CD4-positive, alpha-beta memory T cell (primary cell): ENCODE measurements at regions of chr1 and their contacts with region 1.

Region 1: DNA sequence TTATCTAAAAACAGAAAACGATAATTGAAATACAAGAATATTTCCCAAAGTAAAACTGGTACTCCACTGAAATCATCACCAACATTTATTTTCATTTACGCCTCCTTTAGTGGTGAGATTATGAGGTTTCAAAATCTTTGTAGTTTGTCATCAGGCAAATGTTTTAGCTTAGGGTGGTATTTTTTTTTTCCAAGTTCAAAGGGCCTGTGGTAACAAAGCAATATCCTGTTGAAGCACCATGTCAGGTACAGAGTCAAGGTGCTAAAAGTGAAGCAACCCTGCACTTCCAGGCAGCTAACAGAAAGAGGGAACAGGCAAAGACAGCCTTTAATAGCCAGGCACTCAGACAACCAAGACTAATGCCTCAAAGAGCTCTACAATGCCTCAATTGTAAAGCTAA is 89.2 kb downstream of the JAK1 start:
- DNase-seq: peak; percentile 76 to 90 (median 87)
- H3K4me3 ChIP-seq: no peak overlapping the region
- H3K4me3 Mint-ChIP-seq: peak overlapping the region; percentile 65 to 87 (median 82)
- H3K27ac ChIP-seq: peak overlapping the region; percentile 31
- H3K27ac Mint-ChIP-seq: peak overlapping the region; percentile 86 to 96 (median 94)
- H3K4me1 ChIP-seq: peaks cover 59% of the 10 kb centered on the region
- H3K4me1 Mint-ChIP-seq: peaks cover 60 to 89% (median 74%) of the 10 kb centered on the region in 4 donors
- H3K27me3 ChIP-seq: no peaks in the 10 kb centered on the region
- H3K27me3 Mint-ChIP-seq: no peaks in the 10 kb centered on the region

Region 2: DNA sequence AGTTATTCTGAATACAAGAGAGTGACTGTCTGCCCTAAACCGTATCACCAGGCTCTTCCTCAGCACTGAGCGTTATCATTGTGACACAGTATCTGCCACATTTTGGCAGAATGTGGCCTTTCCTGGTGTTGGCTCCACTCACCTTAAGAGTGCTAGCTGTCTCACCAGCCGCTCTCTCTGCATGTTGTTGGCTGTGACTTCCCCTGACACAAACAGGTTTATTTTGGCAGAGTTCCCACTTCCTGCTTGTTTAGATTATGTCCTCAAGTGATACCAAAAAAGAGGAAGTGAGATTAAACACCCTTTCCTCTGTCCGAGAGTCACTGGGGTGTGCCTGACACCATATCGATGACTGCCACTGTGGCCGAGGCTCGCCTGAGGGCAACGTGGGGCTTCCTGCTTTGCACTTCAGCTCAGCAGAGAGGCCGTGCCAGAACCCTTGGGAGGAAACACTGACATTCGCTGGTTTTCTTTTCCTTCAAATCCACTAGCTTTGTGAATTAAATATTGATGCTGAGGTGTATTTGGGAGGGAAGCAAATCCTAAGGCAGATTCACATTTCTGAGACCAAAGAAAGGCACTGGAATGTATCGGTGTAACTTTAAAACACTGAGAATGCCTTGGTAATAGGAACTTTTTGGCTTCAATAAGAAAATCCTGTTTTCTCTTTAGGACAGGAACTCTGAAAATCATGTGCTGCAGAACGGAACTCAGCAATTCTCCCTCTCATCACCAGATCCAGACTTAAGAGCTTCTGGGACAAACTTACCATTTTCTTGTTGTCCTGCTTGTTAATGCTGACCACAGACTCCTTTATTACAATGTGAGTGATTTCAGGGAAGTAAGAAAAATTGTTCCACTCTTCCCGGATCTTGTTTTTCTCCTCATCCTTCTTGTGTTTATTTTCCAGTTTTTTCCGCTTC is 12.9 kb before region 1 on chr1:
- CTCF ChIA-PET with region 1: interaction called, 6 read pairs
- POLR2A ChIA-PET with region 1: interaction called, 30 read pairs
- intact Hi-C with region 1: loop called (anchors 2 kb)
- DNase-seq: peak; percentile 71 to 77 (median 73)
- H3K4me3 ChIP-seq: no peak overlapping the region
- H3K4me3 Mint-ChIP-seq: peak overlapping the region in 7 of 8 donors; percentile 7 to 79 (median 64)
- H3K27ac ChIP-seq: peak overlapping the region; percentile 48
- H3K27ac Mint-ChIP-seq: peak overlapping the region; percentile 63 to 93 (median 89)
- H3K4me1 ChIP-seq: peaks cover 29% of the 10 kb centered on the region
- H3K4me1 Mint-ChIP-seq: peaks cover 30 to 58% (median 46%) of the 10 kb centered on the region in 4 donors
- H3K27me3 ChIP-seq: no peaks in the 10 kb centered on the region
- H3K27me3 Mint-ChIP-seq: no peaks in the 10 kb centered on the region

Region 3: GRCh38 chr1:64895500-64895899 is 18.3 kb after region 1 on chr1:
- CTCF ChIA-PET with region 1: interaction called, 4 read pairs
- POLR2A ChIA-PET with region 1: interaction called, 6 read pairs
- intact Hi-C with region 1: loop called (anchors 1 kb)
- DNase-seq: no peak
- H3K4me3 ChIP-seq: no peak overlapping the region
- H3K4me3 Mint-ChIP-seq: peak overlapping the region in 7 of 8 donors; percentile 13 to 49 (median 28)
- H3K27ac ChIP-seq: no peak overlapping the region
- H3K27ac Mint-ChIP-seq: peak overlapping the region in 5 of 7 donors; percentile 2 to 72 (median 17)
- H3K4me1 ChIP-seq: peaks cover 96% of the 10 kb centered on the region
- H3K4me1 Mint-ChIP-seq: peaks cover 82 to 98% (median 91%) of the 10 kb centered on the region in 4 donors
- H3K27me3 ChIP-seq: no peaks in the 10 kb centered on the region
- H3K27me3 Mint-ChIP-seq: no peaks in the 10 kb centered on the region

Region 4: DNA sequence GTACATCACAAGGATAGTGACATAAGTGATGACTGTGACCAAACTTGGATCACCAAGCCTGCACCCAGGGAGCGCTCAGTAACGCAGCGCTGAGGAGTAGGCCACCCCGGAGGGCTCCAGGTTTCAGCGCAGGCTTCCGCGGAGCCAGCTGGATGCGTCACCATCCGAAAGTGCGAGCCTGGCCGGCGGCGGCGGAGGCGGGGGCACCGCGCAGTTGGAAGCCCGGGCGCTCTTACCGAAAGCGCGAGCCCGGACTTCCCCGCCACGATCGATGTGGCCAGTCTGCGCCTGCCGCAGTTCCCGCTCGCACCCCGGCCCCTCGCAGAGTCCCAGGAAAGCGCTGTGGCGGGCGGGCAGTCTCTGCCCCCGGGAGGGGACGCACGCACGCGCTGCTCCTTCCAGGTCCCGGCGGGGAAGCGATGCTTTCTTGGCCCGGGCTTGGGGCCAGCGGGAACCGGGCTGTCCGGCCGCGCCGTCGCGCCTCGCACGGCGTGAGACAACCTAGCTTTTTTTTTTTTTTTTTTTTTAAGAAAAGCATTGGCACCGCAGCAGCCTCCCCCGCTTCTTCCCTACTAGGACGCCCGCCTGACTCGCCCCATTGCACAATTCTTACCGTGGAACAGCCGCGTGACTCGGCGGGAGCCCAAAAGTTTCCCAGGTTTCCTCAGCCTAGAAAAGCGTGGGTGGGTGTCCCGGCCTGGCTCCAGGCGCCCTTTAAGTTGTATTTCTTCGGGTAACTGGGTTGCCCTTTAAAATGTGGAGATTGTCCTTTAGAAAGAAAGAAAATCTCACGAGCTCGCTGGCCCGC is 125.6 kb after region 1 on chr1:
- CTCF ChIA-PET with region 1: interaction called, 8 read pairs
- POLR2A ChIA-PET with region 1: interaction called, 11 read pairs
- intact Hi-C with region 1: no loop called
- DNase-seq: peak; percentile 67 to 87 (median 72)
- H3K4me3 ChIP-seq: peak overlapping the region; percentile 33 to 49
- H3K4me3 Mint-ChIP-seq: peak overlapping the region; percentile 77 to 90 (median 89)
- H3K27ac ChIP-seq: peak overlapping the region; percentile 52
- H3K27ac Mint-ChIP-seq: peak overlapping the region; percentile 57 to 96 (median 89)
- H3K4me1 ChIP-seq: peaks cover 25% of the 10 kb centered on the region
- H3K4me1 Mint-ChIP-seq: peaks cover 21 to 43% (median 30%) of the 10 kb centered on the region in 4 donors
- H3K27me3 ChIP-seq: no peaks in the 10 kb centered on the region
- H3K27me3 Mint-ChIP-seq: no peaks in the 10 kb centered on the region